ENCODE measurements at regions of chr7 and their contacts with region 1.

Region 1: DNA sequence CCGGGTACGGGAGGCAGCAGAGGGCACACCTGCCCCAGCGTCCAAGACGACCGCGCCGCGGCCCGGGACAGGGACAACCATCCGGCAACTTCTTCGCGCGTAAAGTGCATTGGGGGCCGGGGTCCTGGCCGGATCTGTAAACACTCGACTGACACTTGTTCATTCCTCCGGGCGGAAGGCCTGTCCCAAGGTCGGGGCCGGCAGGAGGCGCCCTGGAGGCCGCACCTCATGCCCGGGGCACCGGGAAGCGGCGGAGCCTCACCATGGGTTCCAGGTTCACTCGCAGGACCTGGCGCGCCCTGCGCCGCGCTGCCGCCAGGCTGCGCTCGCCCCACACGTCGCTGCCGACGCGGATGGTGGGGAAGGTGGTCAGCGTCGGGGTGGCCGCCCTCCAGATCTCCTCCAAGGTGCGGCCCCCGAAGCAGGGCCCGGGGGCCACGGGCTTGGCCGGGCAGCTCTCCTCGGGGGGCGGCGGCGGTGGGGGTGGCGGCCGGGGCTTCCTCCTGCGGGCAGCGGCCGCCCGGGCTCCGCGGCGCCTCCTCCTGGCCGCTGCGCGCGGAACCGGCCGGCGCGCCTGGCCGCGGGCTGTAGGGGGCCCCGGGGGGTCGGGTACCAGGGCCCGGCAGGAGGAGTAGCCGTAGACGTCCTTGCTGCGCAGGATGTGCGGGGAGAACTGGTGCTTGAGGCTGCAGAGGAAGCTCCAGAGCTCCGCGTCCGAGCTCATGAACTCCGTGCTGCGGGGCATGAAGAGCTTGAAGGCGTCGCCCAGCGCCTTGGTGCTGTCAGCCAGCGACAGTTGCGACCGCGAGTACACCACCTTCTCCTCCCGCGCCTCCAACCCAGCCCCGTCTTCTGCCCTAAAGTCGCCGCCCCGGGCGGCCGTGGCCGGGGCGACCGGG is 746 bp downstream of the CCDC71L start:
- DNase-seq: peak; percentile 87

Region 2: GRCh38 chr7:106542550-106543220 is 117.5 kb before region 1 on chr7:
- intact Hi-C with region 1: loop called (anchors 5 kb)
- DNase-seq: no peak

Region 3: DNA sequence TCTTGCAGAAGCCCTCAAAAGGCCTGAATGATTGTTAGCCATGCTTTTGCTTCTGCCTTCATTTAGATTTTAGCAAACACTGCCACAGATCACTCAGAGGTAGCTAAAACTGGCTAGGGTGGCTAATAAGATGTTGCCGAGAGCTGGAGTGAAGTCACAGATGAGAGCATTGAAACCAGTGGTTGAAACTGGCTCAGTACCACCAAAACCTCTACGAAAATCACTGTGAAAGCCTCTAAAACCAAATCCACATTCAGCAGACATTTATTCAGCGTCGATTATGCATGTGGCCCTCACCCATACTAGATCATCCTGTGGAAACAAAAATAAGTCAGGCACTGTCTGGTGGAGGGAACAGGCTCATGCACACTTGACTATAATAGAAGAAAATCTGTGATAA is 255.7 kb after region 1 on chr7:
- intact Hi-C with region 1: no loop called
- DNase-seq: no peak

Measured in cardiac septum (tissue), 1 donor.